Body of pancreas (tissue), 4 donors: ENCODE measurements at regions of chr20 and their contacts with region 1.

Region 1: GRCh38 chr20:44080646-44081267 is 106.2 kb downstream of the JPH2 start:
- DNase-seq: peak; percentile 79 to 86 (median 81)
- ATAC-seq: peak; percentile 93
- H3K4me3 ChIP-seq: no peak overlapping the region
- H3K27ac ChIP-seq: no peak overlapping the region
- H3K4me1 ChIP-seq: no peaks in the 10 kb centered on the region
- H3K27me3 ChIP-seq: no peaks in the 10 kb centered on the region
- CTCF ChIP-seq: peak; percentile 88 to 99 (median 97)
- POLR2A ChIP-seq: no peak

Region 2: DNA sequence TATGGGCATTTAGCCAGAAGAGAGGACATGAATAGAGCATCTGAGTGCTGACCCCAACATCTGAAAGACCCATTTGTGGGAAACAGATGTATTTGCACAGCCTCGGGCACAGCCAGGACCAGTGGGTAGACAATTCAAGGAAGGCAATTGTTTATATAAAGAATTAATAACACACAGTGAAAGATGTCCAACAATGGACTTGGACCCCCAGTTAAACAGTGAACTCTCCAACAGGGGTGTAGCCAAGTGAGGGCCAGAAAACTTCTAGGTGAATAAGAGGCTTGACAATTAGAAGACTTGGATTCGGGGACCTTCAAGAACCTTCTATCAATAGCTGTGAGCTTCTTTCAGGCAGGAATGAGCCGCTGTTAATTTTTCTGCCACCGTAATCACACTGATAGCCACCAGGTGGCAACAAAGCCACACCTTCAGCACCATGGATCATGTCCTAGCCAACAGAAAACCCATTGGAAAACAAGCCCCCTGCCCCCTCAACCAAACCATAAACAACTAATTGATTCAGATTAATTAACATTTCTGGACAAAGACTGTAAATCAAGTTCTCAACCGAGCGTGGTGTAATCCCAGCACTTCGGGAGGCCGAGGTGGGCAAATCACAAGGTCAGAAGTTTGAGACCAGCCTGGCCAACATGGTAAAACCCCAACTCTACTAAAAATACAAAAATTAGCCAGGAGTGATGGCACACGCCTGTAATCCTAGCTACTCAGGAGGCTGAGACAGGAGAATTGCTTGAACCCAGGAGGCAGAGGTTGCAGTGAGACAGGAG is 631.8 kb before region 1 on chr20:
- intact Hi-C with region 1: loop called (anchors 5 kb)
- DNase-seq: peak; percentile 51 to 66 (median 55)
- ATAC-seq: peak; percentile 80
- H3K4me3 ChIP-seq: no peak overlapping the region
- H3K27ac ChIP-seq: no peak overlapping the region
- H3K4me1 ChIP-seq: no peaks in the 10 kb centered on the region
- H3K27me3 ChIP-seq: peaks cover 0 to 1% of the 10 kb centered on the region in 2 donors
- CTCF ChIP-seq: peak; percentile 58 to 84 (median 81)
- POLR2A ChIP-seq: no peak

Region 3: GRCh38 chr20:43749734-43750294 is 330.9 kb before region 1 on chr20:
- intact Hi-C with region 1: loop called (anchors 5 kb)
- DNase-seq: peak; percentile 73 to 84 (median 78)
- ATAC-seq: peak; percentile 73
- H3K4me3 ChIP-seq: no peak overlapping the region
- H3K27ac ChIP-seq: no peak overlapping the region
- H3K4me1 ChIP-seq: peaks cover 4% of the 10 kb centered on the region
- H3K27me3 ChIP-seq: no peaks in the 10 kb centered on the region
- CTCF ChIP-seq: peak; percentile 83 to 99 (median 91)
- POLR2A ChIP-seq: no peak

Region 4: GRCh38 chr20:44137210-44137801 is 56.5 kb after region 1 on chr20:
- intact Hi-C with region 1: no loop called
- DNase-seq: no peak
- ATAC-seq: no peak
- H3K4me3 ChIP-seq: no peak overlapping the region
- H3K27ac ChIP-seq: no peak overlapping the region
- H3K4me1 ChIP-seq: no peaks in the 10 kb centered on the region
- H3K27me3 ChIP-seq: no peaks in the 10 kb centered on the region
- CTCF ChIP-seq: no peak
- POLR2A ChIP-seq: no peak